HAP-1 (cell line): ENCODE measurements at regions of chr6 and their contacts with region 1.

Region 1: DNA sequence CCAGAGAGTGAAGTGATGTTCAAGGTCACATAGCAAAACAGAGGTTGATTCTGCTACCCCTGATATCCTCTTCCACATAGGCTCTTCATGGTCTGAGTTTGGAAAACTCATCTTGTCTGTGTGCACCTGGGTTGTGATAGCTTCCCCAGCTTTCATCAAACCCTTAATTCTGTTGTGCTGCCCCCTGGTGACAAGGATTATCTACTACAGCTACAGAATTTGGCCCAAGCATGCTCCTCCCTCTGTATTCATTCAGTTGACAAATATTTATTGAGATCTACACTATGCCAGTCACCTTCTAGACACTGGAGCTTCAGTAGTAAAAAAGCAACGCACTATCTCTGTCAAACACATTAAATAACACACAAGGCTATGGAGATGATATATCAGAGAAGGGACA is 50.4 kb downstream of the SMPDL3A start:
- DNase-seq: peak; percentile 8 to 74
- H3K4me3 ChIP-seq: no peak overlapping the region
- H3K4me1 ChIP-seq: no peaks in the 10 kb centered on the region
- H3K27me3 ChIP-seq: peaks cover 4% of the 10 kb centered on the region

Region 2: DNA sequence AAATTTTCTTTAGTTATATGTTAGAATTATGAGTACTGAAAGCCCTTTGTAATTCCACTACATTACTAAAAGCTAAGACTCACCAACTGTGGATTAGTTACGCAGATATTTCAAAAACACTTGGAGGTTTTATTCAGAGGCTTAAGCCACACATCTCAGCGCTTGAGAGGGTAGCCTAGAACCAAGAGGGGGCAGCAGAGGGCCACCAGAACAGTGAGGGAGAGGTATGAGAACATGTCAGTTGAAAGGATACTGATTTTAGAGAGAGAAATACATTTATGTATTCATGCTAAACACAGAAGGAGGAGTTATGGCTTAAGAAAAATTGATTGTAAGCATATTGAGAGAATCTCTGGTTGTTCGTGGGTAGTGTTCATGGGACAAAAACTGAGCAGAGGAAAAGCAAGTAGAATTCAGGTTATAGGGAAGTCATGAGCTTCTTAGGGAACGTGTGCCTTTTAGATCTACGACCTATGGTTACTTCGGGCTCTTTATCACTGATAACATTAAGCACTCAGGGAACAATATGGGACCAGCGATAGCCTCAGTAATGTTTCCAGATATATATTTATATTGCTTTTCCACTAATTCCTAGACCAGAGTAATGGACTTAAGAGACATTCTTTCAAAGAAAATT is 347.4 kb before region 1 on chr6:
- in situ Hi-C with region 1: loop called (anchors 25 kb)
- DNase-seq: peak; percentile 57 to 83
- H3K4me3 ChIP-seq: no peak overlapping the region
- H3K4me1 ChIP-seq: no peaks in the 10 kb centered on the region
- H3K27me3 ChIP-seq: no peaks in the 10 kb centered on the region

Region 3: GRCh38 chr6:122749451-122750050 is 89.9 kb before region 1 on chr6:
- in situ Hi-C with region 1: loop called (anchors 10 kb)
- DNase-seq: no peak
- H3K4me3 ChIP-seq: no peak overlapping the region
- H3K4me1 ChIP-seq: no peaks in the 10 kb centered on the region
- H3K27me3 ChIP-seq: no peaks in the 10 kb centered on the region